ENCODE measurements at regions of chr12 and their contacts with region 1.

Region 1: DNA sequence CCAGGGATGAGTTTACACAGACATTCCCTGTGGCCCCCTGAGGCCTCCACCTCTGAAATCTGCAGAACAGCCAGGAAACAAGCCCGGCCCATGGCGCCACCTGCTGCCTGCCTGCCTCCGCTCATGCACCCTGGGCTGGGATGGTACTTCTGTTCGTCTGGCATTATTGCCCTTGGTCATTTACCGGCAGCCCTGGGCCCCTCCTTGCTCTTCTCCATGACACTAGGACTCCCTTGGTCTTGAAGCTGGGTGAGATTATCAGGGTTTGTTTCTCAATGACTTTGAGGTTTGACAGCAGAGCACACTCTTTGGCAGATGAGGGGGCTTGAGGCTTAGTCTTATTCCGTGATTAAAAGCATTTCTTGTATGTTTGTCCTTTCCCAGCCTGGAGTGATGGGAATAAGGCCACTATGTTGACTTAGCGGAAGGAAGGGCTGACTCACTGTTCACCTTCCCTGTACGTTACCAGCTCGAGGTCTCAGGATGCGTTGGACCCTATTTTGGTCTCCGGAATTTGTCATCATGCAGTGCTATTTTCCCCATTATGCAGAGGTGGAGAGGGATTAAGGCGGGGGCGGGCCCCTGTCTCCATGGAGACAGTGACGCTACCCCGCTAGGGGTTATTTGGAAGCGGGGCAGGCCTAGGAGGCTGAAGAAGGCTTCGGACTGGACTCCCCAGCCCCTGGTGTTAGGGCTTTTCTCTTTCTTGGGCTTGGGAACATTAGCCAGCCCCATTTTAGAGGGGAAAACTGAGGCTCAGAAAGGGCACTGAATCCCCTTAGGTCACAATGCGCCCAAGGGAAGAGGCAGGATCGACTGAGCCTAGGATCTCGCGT is 706 bp upstream of the PEX5 start:
- DNase-seq: peak; percentile 64
- ATAC-seq: peak; percentile 83
- H3K4me3 ChIP-seq: peak overlapping the region; percentile 77 to 95 (median 84)
- H3K27ac ChIP-seq: peak overlapping the region; percentile 52
- H3K4me1 ChIP-seq: peaks cover 37% of the 10 kb centered on the region
- H3K27me3 ChIP-seq: no peaks in the 10 kb centered on the region; a peak in 1 of 5 replicates
- CTCF ChIP-seq: peak; percentile 96
- EP300 ChIP-seq: no peak
- POLR2A ChIP-seq: no peak
- RAD21 ChIP-seq: peak; percentile 62; the same call in 1 of the 2 replicates

Region 2: GRCh38 chr12:7129872-7130680 is 58.7 kb before region 1 on chr12 and contains the start of gene CLSTN3:
- CTCF ChIA-PET with region 1: no interaction called
- POLR2A ChIA-PET with region 1: interaction called, 3 read pairs
- in situ Hi-C with region 1: loop called (anchors 5 kb)
- intact Hi-C with region 1: no loop called
- DNase-seq: peak; percentile 69
- ATAC-seq: peak; percentile 69
- H3K4me3 ChIP-seq: peak within 1 kb of the TSS; percentile 76 to 92 (median 88)
- H3K27ac ChIP-seq: peak within 1 kb of the TSS; percentile 92
- H3K4me1 ChIP-seq: peaks cover 61% of the 10 kb centered on the region
- H3K27me3 ChIP-seq: no peaks in the 10 kb centered on the region; a peak in 1 of 5 replicates
- CTCF ChIP-seq: no peak
- EP300 ChIP-seq: no peak
- POLR2A ChIP-seq: peak; percentile 33 to 83; a peak in 3 of 4 replicates
- RAD21 ChIP-seq: no peak; the same call in 1 of the 2 replicates
- total RNA-seq, gene CLSTN3: 10.8 and 26.2 TPM in 2 replicates

Region 3: DNA sequence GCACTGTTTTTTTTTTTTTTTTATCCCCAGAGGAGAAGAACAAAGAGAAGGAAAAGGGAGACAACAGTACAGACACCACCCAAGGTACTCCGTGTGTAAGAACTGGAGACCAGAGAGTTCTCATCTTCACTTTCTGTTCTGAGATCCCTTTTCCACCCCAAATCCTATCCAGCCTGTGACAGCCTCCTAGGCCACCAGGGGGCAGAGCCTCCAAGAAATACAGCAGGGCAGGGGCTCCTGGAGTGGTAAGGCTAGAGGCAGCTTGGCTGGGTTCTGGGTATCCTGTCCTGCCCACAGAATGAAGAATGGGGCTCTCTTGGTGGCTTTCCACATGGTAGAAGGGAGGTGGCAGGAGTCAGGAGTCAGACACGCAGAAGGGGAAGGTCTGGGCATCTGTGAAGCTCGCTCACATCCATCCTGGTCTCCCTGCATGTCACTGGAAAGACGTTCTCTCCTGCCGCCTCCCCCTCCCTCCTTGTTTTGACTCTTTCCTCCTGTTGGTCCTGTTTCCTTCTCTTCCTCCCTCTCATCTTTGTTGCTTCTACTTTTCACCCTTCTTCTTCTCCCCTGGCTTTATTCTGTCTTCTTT is 46.6 kb before region 1 on chr12:
- CTCF ChIA-PET with region 1: interaction called, 16 read pairs
- POLR2A ChIA-PET with region 1: no interaction called
- in situ Hi-C with region 1: no loop called
- intact Hi-C with region 1: no loop called
- DNase-seq: peak; percentile 41
- ATAC-seq: peak; percentile 87
- H3K4me3 ChIP-seq: no peak overlapping the region
- H3K27ac ChIP-seq: no peak overlapping the region
- H3K4me1 ChIP-seq: no peaks in the 10 kb centered on the region; the same call in 1 of the 2 replicates
- H3K27me3 ChIP-seq: no peaks in the 10 kb centered on the region
- CTCF ChIP-seq: peak; percentile 80
- EP300 ChIP-seq: no peak
- POLR2A ChIP-seq: no peak
- RAD21 ChIP-seq: 0 out of 2 replicates have a peak, but pooled peaks have one; percentile 20

Region 4: GRCh38 chr12:7162691-7163114 is 26.1 kb before region 1 on chr12:
- CTCF ChIA-PET with region 1: interaction called, 5 read pairs
- POLR2A ChIA-PET with region 1: no interaction called
- in situ Hi-C with region 1: no loop called
- intact Hi-C with region 1: loop called (anchors 1 kb)
- DNase-seq: peak; percentile 52
- ATAC-seq: peak; percentile 92
- H3K4me3 ChIP-seq: no peak overlapping the region; a peak in 1 of 6 replicates
- H3K27ac ChIP-seq: no peak overlapping the region
- H3K4me1 ChIP-seq: 0 out of 2 replicates have a peak, but pooled peaks cover 8% of the 10 kb centered on the region
- H3K27me3 ChIP-seq: peaks cover 0 to 6% of the 10 kb centered on the region in 2 experiments; a peak in 2 of 5 replicates
- CTCF ChIP-seq: peak; percentile 83
- EP300 ChIP-seq: no peak
- POLR2A ChIP-seq: no peak
- RAD21 ChIP-seq: peak; percentile 52; the same call in 1 of the 2 replicates

Measured in HepG2 (cell line).